PC-3 (cell line): ENCODE measurements at regions of chr1 and their contacts with region 1.

Region 1: DNA sequence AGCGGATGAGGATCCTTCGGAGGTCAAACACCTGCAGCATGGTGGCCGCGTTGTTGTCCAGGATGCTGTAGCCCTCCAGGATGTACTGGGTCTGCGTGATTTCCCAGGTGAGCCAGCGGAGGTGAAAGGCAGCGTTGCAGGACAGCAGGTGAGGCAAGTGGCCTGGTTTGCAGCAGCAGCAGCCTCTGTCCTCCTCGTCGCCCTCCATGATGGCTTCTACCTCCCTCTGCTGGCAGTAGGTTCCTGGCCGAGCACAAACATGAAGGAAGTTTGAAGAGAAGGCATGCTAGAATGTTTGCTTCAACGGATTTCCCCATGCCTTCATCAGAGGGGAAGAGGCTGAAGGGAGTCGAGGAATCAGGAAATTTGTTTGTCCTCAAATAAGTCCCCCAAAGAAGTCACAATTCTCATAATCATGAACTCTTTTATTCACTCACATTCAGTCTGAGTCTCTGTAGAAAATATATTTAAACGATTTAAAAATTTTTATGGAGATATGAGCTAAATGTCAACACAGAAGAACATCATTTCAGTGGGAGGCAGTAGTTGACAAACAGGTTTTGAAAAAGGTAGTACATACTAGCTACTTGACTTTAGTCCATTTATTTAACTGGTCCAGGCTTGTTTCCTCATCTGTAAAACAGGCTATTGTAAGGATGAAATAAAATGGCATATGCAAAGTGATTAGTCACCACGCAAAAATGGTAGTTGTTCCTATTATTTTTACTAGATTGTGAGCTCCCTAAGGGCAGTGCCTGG is 74.9 kb downstream of the NTPCR start:
- DNase-seq: peak; percentile 87
- ATAC-seq: peak; percentile 87
- H3K4me3 ChIP-seq: no peak overlapping the region
- H3K27ac ChIP-seq: peak overlapping the region; percentile 59
- H3K4me1 ChIP-seq: peaks cover 18% of the 10 kb centered on the region
- H3K27me3 ChIP-seq: no peaks in the 10 kb centered on the region
- CTCF ChIP-seq: peak; percentile 81

Region 2: DNA sequence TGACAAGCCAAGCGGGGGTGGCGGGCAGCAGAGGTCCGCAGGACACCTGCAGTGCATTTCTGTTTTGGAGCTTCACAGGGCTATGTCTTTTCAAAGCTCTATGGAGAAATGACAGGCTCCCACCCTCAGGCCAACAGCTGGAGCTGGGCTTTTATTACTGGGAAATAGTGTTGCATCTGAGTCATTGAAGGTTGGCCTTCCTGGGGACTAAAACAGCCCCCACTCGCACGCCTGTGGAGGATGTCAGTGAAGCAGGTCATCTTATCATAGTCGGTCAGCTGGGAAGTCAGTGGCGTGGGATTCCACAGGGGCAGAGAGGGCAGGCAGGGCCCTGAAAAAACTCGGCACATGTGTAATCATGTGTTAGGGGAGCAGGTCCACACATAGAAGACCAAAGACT is 19.6 kb before region 1 on chr1:
- CTCF ChIA-PET with region 1: no interaction called
- POLR2A ChIA-PET with region 1: no interaction called
- intact Hi-C with region 1: no loop called
- DNase-seq: peak; percentile 51
- ATAC-seq: peak; percentile 70
- H3K4me3 ChIP-seq: no peak overlapping the region
- H3K27ac ChIP-seq: no peak overlapping the region
- H3K4me1 ChIP-seq: peaks cover 20% of the 10 kb centered on the region
- H3K27me3 ChIP-seq: no peaks in the 10 kb centered on the region
- CTCF ChIP-seq: no peak

Region 3: GRCh38 chr1:233042834-233043233 is 17.5 kb after region 1 on chr1:
- CTCF ChIA-PET with region 1: no interaction called
- POLR2A ChIA-PET with region 1: no interaction called
- intact Hi-C with region 1: no loop called
- DNase-seq: no peak
- ATAC-seq: no peak
- H3K4me3 ChIP-seq: no peak overlapping the region
- H3K27ac ChIP-seq: no peak overlapping the region
- H3K4me1 ChIP-seq: no peaks in the 10 kb centered on the region
- H3K27me3 ChIP-seq: no peaks in the 10 kb centered on the region
- CTCF ChIP-seq: no peak

Region 4: GRCh38 chr1:233105225-233105624 is 79.9 kb after region 1 on chr1:
- CTCF ChIA-PET with region 1: no interaction called
- POLR2A ChIA-PET with region 1: no interaction called
- intact Hi-C with region 1: no loop called
- DNase-seq: no peak
- ATAC-seq: no peak
- H3K4me3 ChIP-seq: no peak overlapping the region
- H3K27ac ChIP-seq: no peak overlapping the region
- H3K4me1 ChIP-seq: peaks cover 25% of the 10 kb centered on the region
- H3K27me3 ChIP-seq: no peaks in the 10 kb centered on the region
- CTCF ChIP-seq: no peak

Region 5: DNA sequence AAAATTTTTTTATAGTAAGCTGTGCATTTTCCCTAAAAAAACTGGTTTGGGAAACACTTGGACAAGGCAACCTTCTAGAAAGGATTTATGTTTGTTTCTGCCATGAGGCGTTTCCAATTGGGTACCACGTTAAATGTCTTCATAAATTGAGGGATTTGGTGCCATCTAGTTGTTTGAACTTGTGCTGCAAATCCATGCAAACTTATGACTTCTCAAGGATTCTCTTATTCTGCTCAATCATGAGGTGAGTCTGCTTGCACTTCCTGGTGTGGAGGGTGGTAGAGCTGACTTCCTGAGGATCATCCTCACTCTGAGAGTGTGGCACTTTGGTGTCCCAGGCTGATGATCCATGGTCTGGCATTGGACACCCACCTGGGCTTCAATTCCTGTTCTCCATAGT is 146.9 kb after region 1 on chr1:
- CTCF ChIA-PET with region 1: interaction called, 3 read pairs
- POLR2A ChIA-PET with region 1: no interaction called
- intact Hi-C with region 1: loop called (anchors 1 kb)
- DNase-seq: peak; percentile 89
- ATAC-seq: peak; percentile 75
- H3K4me3 ChIP-seq: no peak overlapping the region
- H3K27ac ChIP-seq: no peak overlapping the region
- H3K4me1 ChIP-seq: peaks cover 12% of the 10 kb centered on the region; the same call in 1 of the 2 replicates
- H3K27me3 ChIP-seq: no peaks in the 10 kb centered on the region
- CTCF ChIP-seq: peak; percentile 89